K562 (cell line): ENCODE measurements at regions of chr7 and their contacts with region 1.

Region 1: DNA sequence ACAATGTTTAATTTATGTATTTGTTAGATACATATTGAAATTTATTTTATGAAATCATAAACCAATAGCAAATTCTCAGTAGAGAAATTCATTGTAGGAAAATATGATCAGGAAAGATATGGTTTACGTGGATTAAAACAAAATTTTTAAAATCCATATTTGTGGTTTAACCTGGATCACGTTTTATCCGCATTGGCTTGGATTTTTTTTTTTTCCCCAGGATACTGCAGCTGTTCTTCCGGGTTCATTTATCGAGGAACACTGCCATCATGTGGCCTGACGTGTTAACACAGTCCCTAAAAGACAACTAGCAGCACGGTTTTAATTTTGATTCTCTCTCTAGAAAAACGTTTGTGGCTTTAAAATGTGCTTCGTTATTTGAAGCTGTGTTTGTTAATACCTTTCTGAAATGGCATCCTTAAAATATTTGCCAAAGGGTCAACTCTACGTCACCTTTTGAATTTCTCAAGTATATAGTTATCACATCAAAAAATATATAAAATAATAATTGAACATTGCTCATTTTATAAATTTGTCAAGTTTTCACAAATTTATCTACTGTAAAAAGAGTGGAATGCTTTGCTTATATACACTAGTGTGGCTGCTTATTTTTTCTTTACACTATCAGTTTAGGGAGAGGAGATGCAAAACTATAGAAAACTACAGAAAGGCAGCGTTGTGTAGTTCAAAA is 8.7 kb upstream of the ASB4 start:
- DNase-seq: peak; percentile 73 to 77 (median 76)
- ATAC-seq: peak; percentile 85
- H3K4me3 ChIP-seq: no peak overlapping the region
- H3K27ac ChIP-seq: no peak overlapping the region
- H3K4me1 ChIP-seq: no peaks in the 10 kb centered on the region
- H3K27me3 ChIP-seq: peaks cover 0 to 9% of the 10 kb centered on the region in 2 experiments; a peak in 3 of 5 replicates
- CTCF ChIP-seq: peak; percentile 65 to 89 (median 73)
- EP300 ChIP-seq: no peak
- POLR2A ChIP-seq: no peak
- RAD21 ChIP-seq: peak; percentile 82 to 85

Region 2: GRCh38 chr7:94436018-94436604 is 1040.9 kb before region 1 on chr7:
- CTCF ChIA-PET with region 1: no interaction called
- POLR2A ChIA-PET with region 1: no interaction called
- in situ Hi-C with region 1: loop called (anchors 25 kb)
- intact Hi-C with region 1: no loop called
- DNase-seq: peak; percentile 66 to 82 (median 72)
- ATAC-seq: peak; percentile 99
- H3K4me3 ChIP-seq: no peak overlapping the region
- H3K27ac ChIP-seq: no peak overlapping the region
- H3K4me1 ChIP-seq: no peaks in the 10 kb centered on the region
- H3K27me3 ChIP-seq: no peaks in the 10 kb centered on the region
- CTCF ChIP-seq: peak; percentile 68 to 85 (median 78)
- EP300 ChIP-seq: no peak
- POLR2A ChIP-seq: no peak
- RAD21 ChIP-seq: peak; percentile 48 to 67

Region 3: DNA sequence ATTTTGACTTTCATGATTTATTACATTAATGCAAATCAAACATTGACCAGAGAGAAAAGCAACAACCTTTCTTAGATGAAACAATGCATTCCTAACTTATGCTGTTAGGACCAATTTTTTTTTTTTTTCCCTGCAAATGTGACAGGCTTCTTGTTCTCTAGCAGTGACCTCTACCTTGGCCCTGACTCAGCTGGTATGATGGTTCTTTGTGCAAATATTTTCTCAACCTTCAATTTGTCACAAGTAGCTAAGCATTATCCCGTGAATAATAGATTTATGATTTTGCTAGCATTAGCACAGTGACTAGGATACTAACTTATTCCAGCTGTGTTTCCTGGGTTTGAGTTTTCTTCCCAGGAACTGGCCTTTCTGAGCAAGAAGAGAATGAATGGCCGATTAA is 504.8 kb before region 1 on chr7:
- CTCF ChIA-PET with region 1: no interaction called
- POLR2A ChIA-PET with region 1: no interaction called
- in situ Hi-C with region 1: no loop called
- intact Hi-C with region 1: loop called (anchors 5 kb)
- DNase-seq: no peak
- ATAC-seq: no peak
- H3K4me3 ChIP-seq: no peak overlapping the region
- H3K27ac ChIP-seq: no peak overlapping the region
- H3K4me1 ChIP-seq: no peaks in the 10 kb centered on the region
- H3K27me3 ChIP-seq: no peaks in the 10 kb centered on the region
- CTCF ChIP-seq: no peak
- EP300 ChIP-seq: no peak
- POLR2A ChIP-seq: no peak
- RAD21 ChIP-seq: no peak

Region 4: DNA sequence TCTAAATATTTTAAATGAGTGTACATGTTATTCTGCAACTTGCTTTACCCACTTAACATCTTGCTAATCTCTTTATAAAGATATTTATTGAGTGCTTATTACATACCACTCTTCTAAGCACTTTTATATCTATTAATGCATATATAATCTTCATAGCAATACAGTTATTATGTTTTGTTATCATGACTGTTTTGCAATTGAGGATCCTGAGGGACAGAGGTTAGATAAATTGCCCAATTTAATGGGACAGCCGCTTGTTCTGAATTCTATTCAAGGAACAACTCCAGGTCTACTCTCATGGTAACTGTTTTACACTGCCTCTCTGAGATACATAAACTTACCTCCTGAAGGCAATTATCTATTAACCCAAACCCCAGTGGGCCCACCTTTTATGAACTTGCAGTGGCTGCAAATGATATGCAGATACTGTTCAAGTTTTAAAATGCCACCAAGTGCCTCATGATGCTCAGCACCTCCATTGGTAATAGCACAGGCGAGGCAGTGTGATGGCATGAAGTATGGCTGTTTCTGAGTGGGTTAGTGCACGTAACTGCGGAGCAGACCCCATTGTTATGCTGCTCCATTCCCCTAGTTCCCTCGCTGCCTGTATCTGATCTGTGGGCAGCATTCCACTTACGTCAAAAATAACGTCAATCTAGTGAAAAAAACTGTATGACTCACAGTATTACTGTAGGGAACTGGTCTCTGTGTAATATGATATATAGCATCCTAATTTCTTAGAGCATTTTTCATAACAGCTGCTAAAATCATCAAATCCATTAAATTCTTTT is 213.1 kb before region 1 on chr7:
- CTCF ChIA-PET with region 1: no interaction called
- POLR2A ChIA-PET with region 1: no interaction called
- in situ Hi-C with region 1: no loop called
- intact Hi-C with region 1: loop called (anchors 5 kb)
- DNase-seq: peak in 1 of 4 experiments; percentile 5
- ATAC-seq: no peak
- H3K4me3 ChIP-seq: no peak overlapping the region
- H3K27ac ChIP-seq: no peak overlapping the region
- H3K4me1 ChIP-seq: no peaks in the 10 kb centered on the region; a peak in 1 of 5 replicates
- H3K27me3 ChIP-seq: no peaks in the 10 kb centered on the region
- CTCF ChIP-seq: no peak
- EP300 ChIP-seq: no peak
- POLR2A ChIP-seq: no peak
- RAD21 ChIP-seq: no peak

Region 5: DNA sequence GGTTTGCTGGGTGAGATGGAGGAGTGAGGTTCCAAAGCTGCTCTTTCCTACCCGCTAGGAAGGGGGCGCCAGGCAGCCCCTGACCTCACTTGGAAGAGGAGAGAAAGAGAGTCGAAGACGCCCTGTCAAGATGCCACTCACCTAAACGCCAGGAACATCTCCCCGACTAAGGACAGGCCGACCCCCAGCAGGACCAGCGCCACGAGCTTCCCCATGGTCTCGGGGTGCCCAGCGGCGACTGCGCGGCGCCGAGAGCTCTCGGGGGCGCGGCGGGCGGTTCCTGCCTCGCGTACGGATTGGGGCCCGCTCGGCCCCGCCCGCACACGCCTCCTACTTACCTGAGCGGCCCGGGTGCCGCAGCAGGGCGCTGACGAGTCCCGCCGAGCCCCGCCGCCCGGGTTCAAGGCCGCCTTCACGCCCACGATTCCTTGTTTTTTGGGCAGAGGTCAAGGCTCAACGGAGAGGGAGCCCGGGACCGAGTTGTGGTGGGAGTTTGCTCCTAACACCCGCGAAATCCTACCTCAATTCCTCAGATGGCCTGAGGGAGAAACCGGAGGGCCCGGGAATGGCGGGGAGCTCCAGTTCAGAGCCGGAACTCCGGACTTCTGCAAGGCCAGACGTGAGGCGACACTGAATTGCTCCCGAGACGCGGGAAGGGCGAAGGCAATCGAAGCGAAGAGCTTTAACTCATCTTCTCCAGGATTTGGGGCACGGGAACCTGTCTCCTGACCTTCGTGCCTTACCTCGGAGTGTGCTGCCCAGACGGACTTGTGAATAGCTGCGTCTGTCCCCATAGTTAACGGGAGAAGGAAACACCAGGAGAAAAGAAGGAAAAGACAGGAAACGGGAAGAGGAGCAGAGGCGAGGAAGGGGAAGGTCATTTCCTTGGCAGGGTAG is 80.7 kb before region 1 on chr7 and contains the start of gene PON3:
- CTCF ChIA-PET with region 1: interaction called, 4 read pairs
- POLR2A ChIA-PET with region 1: no interaction called
- in situ Hi-C with region 1: no loop called
- intact Hi-C with region 1: loop called (anchors 2 kb)
- DNase-seq: peak; percentile 41 to 76 (median 62)
- ATAC-seq: peak; percentile 97
- H3K4me3 ChIP-seq: peak within 1 kb of the TSS; percentile 42
- H3K27ac ChIP-seq: no peak within 1 kb of the TSS
- H3K4me1 ChIP-seq: peaks cover 0 to 8% of the 10 kb centered on the region in 2 experiments; a peak in 3 of 5 replicates
- H3K27me3 ChIP-seq: peaks cover 11 to 22% of the 10 kb centered on the region in 2 experiments; a peak in 4 of 5 replicates
- CTCF ChIP-seq: peak; percentile 69 to 87 (median 77)
- EP300 ChIP-seq: no peak
- POLR2A ChIP-seq: no peak
- RAD21 ChIP-seq: peak in 1 of 2 experiments; percentile 48; a peak in 2 of 4 replicates
- polyA plus RNA-seq, gene PON3: 0.15 TPM in 1 of 2 experiments, not detected in the other